IMR-90 (cell line): ENCODE measurements at regions of chr13 and their contacts with region 1.

Region 1: DNA sequence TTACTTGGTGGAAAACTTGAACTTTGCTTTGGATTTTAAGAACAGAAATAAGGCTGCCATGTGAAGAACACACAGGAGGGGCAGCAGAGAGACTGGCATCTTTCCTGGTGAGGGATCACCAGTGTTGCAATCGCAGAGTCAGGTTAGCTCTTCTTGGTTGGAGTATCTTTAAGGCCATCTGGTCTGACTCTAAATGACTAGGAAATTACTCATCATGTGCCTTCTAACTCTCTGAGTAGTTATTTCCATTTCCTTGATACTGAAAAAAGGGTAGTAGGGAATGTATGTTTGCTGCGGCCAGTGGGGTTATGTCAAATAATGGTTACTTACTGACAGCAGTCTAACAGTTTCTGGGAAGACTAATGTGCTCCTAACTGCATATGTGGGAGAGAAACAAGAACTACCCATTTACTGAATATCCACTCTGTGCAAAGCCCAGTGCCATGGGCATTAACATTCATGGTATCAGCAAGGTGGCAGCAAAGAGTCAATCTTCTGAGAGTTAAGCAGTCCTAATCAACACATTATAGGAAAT is 122.1 kb downstream of the COG6 start:
- DNase-seq: peak; percentile 90
- ATAC-seq: peak; percentile 54
- H3K4me3 ChIP-seq: no peak overlapping the region
- H3K27ac ChIP-seq: no peak overlapping the region
- H3K4me1 ChIP-seq: peaks cover 8% of the 10 kb centered on the region
- H3K27me3 ChIP-seq: no peaks in the 10 kb centered on the region
- CTCF ChIP-seq: peak; percentile 53
- POLR2A ChIP-seq: no peak
- RAD21 ChIP-seq: peak; percentile 37; the same call in 1 of the 2 replicates

Region 2: DNA sequence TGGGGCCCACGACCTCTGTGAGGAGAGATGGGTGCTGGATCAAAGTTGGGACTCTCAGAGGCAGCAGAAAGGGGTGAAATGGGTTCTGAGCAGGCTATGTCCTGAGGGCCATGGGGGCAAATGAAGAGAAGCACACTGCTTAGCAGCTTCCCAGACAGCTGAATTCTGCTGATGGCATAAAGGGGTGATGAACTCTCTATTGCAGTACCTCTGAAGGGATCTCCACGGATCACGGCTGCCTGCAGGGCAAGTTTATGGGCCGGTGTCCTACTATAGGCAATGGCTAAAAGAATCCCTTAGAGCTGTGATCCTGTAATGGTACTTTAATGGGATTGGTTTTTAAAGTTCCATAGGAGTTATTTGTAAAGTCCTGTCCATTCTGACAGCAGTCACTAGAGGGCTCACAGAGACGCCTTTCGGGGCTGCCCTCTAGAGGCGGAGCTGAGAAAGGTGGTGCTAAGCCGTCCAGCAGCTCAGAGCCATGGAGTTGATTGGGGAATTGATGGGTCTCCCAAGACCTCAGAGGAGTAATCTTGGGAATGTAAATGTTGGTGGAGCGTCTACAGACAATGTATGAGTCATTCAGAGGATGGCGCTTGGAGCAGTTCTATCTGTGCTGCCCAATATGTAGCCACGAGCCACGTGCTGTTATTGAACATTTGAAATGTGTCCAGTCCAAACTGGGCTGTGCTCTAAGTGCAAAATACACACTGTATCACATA is 165.1 kb after region 1 on chr13:
- CTCF ChIA-PET with region 1: interaction called, 3 read pairs
- POLR2A ChIA-PET with region 1: no interaction called
- dilution Hi-C with region 1: no loop called
- in situ Hi-C with region 1: no loop called
- intact Hi-C with region 1: loop called (anchors 10 kb)
- DNase-seq: peak; percentile 57
- ATAC-seq: peak; percentile 99
- H3K4me3 ChIP-seq: no peak overlapping the region
- H3K27ac ChIP-seq: no peak overlapping the region
- H3K4me1 ChIP-seq: no peaks in the 10 kb centered on the region
- H3K27me3 ChIP-seq: no peaks in the 10 kb centered on the region
- CTCF ChIP-seq: peak; percentile 99
- POLR2A ChIP-seq: no peak
- RAD21 ChIP-seq: peak; percentile 65